ENCODE measurements at regions of chr6 and their contacts with region 1.

Region 1: DNA sequence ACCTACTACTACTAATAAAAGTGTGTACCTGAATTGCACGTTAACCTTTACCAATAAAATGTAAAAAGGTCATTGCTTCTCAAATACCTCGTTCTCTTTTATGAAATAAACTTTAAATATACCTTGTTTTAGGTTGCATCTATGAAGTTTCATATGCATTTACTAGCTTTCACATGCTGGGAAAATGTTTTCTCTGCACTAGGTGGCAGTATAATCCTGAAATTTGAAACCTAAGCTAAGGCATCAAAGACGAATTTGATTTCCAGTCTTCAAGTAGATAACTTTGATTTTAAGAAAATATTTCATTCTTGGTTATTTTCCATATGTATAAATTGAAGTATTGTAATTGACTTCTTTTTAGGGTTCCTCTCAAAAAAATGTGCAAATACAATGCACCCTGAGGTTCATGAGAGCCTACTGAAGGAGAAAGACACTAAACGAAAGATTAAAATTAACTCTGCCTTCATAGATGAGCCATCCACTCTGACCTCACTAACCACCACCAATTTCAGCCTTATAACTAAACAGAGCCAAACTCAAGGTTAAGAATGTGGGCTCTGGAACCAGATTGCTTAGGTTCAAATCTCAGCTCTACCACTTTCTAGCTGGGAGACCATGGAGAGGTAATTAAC is 7.3 kb upstream of the COL9A1 start:
- DNase-seq: no peak
- ATAC-seq: peak; percentile 56; the same call in 2 of the 3 replicates
- H3K4me3 ChIP-seq: no peak overlapping the region
- H3K27ac ChIP-seq: no peak overlapping the region
- H3K4me1 ChIP-seq: 0 out of 2 replicates have a peak, but pooled peaks cover 3% of the 10 kb centered on the region
- H3K27me3 ChIP-seq: no peaks in the 10 kb centered on the region
- CTCF ChIP-seq: peak; percentile 39 to 69 (median 48); a peak in 5 of 6 replicates
- EP300 ChIP-seq: no peak
- POLR2A ChIP-seq: no peak
- RAD21 ChIP-seq: peak; percentile 76

Region 2: DNA sequence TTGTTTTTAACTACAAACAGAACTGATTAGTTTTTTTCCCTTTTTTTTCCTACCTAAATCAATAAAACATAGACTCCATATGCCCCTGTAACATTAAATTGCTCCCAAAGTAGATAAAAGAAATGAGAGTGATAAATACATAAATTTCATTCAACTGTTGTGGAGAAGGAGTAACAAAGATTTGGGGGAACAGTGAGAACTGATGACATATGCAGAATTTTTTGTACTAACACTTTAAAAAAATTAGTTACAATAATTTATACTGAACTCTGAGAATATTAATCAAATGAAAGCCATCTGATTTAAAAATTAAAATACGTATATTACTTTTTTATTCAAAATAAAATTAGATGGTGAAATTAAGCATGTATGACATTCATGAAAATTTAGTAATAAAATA is 248.2 kb before region 1 on chr6:
- CTCF ChIA-PET with region 1: no interaction called
- POLR2A ChIA-PET with region 1: no interaction called
- RAD21 ChIA-PET with region 1: no interaction called
- SMC1A ChIA-PET with region 1: no interaction called
- in situ Hi-C with region 1: no loop called
- intact Hi-C with region 1: no loop called
- DNase-seq: no peak
- ATAC-seq: no peak
- H3K4me3 ChIP-seq: no peak overlapping the region
- H3K27ac ChIP-seq: no peak overlapping the region
- H3K4me1 ChIP-seq: no peaks in the 10 kb centered on the region
- H3K27me3 ChIP-seq: no peaks in the 10 kb centered on the region
- CTCF ChIP-seq: no peak
- EP300 ChIP-seq: no peak
- POLR2A ChIP-seq: no peak
- RAD21 ChIP-seq: no peak

Region 3: DNA sequence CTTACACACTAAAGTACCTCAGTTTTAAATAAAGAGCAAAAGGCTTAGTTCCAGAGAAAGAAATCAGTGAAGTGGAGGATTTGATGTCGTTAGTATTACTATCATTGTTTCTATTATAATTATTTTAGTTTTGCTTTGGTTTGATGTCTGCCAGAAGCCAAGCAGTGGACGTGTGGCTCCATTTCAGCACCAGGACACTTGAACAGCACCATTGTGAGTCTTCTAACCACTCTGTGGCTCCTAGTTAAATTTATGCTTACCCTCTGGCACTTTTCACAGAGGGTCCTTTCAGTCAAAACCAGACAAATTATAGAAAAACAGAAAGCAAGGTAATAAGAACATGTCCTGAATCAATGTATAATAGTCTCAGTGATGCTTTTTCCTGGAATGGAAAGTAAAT is 10.7 kb before region 1 on chr6:
- CTCF ChIA-PET with region 1: interaction called, 46 read pairs
- POLR2A ChIA-PET with region 1: interaction called, 3 read pairs
- RAD21 ChIA-PET with region 1: interaction called, 5 read pairs
- SMC1A ChIA-PET with region 1: interaction called, 3 read pairs
- in situ Hi-C with region 1: no loop called
- intact Hi-C with region 1: no loop called
- DNase-seq: no peak
- ATAC-seq: no peak
- H3K4me3 ChIP-seq: no peak overlapping the region
- H3K27ac ChIP-seq: no peak overlapping the region
- H3K4me1 ChIP-seq: no peaks in the 10 kb centered on the region
- H3K27me3 ChIP-seq: no peaks in the 10 kb centered on the region
- CTCF ChIP-seq: no peak
- EP300 ChIP-seq: no peak
- POLR2A ChIP-seq: no peak
- RAD21 ChIP-seq: no peak

Region 4: DNA sequence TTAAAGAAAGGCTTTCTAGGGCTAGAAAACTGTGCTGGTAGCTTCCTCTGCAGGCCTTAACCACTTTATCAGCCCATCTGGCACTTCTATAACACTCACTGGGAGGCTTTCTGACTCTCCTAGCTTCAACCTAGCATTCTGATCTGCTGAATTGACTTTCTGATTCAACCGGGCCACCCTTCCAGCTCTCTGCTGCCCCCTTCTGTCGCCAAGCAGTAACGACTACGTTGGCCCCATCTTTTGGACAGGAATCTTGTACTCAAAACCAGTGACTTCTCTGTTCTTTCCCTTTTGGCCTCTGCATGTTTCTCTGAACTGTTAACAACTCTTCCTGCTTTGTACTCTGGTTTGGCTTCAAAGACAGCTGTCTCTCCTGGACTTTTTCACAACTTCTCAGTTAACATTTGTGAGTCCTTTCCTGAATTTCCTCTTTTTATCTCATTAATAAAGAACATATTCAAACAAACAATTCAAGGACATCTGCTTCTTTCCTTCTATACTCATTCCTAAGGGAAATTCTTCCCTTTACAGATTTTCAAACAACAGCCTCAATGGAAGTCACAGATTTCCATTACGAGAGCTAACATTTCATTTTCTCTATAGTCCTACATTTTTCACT is 59.3 kb after region 1 on chr6:
- CTCF ChIA-PET with region 1: interaction called, 257 read pairs
- POLR2A ChIA-PET with region 1: no interaction called
- RAD21 ChIA-PET with region 1: interaction called, 84 read pairs
- SMC1A ChIA-PET with region 1: interaction called, 103 read pairs
- in situ Hi-C with region 1: no loop called
- intact Hi-C with region 1: loop called (anchors 1 kb)
- DNase-seq: peak; percentile 21
- ATAC-seq: peak; percentile 96
- H3K4me3 ChIP-seq: no peak overlapping the region
- H3K27ac ChIP-seq: no peak overlapping the region
- H3K4me1 ChIP-seq: no peaks in the 10 kb centered on the region
- H3K27me3 ChIP-seq: no peaks in the 10 kb centered on the region; a peak in 3 of 4 replicates
- CTCF ChIP-seq: peak; percentile 90 to 93 (median 90)
- EP300 ChIP-seq: no peak
- POLR2A ChIP-seq: no peak
- RAD21 ChIP-seq: peak; percentile 86

Region 5: DNA sequence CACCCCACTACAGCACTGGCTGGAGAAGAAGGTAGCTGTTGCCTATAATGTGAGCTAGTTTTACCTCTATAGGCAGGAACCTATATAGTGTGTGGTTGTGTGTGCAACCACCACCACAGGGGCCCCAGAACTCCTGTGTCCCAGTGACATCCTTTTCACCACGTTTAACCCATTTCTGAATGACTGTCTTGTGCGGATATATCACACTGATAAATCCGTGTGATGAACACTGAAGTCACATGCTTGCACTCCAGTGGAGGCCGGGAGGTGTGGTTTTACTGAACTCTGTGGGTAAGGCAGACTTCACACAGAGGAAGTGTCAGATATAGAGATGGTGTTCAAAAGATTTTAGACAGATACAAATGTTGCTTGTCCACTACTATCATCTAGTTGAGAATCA is 289.0 kb after region 1 on chr6:
- CTCF ChIA-PET with region 1: no interaction called
- POLR2A ChIA-PET with region 1: no interaction called
- RAD21 ChIA-PET with region 1: no interaction called
- SMC1A ChIA-PET with region 1: no interaction called
- in situ Hi-C with region 1: no loop called
- intact Hi-C with region 1: no loop called
- DNase-seq: no peak
- ATAC-seq: no peak
- H3K4me3 ChIP-seq: no peak overlapping the region
- H3K27ac ChIP-seq: no peak overlapping the region
- H3K4me1 ChIP-seq: no peaks in the 10 kb centered on the region
- H3K27me3 ChIP-seq: no peaks in the 10 kb centered on the region
- CTCF ChIP-seq: no peak
- EP300 ChIP-seq: no peak
- POLR2A ChIP-seq: no peak
- RAD21 ChIP-seq: no peak

Region 6: DNA sequence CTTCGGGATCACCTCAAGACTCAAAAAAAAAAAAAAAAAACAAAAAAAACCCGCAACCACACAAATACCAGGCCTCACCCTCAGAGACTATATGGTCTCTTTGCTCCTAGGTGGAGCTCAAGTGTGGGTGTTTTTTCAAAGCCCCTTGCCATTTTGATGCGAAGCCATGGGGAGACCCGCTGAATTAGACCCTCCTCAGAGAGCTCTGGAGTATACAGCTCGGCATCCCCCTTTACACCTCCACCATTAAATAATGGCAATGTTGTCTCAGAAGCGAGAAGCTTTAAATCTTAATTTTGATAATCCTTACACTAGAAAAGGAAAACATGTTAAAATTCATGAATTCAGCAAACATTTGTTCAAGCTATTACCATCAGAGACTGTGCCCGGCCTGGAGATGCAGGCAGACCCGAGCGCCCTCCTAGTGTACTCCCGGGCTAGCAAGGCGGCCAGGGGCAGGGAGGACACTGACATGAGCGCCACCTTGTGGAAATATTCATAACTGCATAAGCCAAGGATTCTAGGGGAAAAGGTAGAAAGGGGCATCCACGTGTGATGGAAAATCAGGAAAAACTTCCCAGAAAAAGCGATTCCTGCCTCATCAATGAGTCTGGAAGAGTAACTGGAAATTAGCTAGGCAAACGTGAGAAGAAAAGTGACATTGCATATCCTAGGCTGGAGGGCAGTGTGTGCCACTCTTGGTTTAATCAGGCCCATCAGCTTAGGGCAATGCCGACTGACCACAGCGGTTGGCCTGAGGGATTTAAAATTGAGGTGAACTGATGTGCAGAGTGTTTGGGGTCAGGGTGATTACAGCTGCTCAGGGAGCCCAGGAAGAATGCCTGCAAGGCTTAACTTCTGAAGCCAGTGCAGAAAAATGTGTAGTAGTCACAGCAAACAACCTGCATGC is 574.1 kb after region 1 on chr6:
- CTCF ChIA-PET with region 1: interaction called, 12 read pairs
- POLR2A ChIA-PET with region 1: no interaction called
- RAD21 ChIA-PET with region 1: interaction called, 4 read pairs
- SMC1A ChIA-PET with region 1: interaction called, 10 read pairs
- in situ Hi-C with region 1: no loop called
- intact Hi-C with region 1: loop called (anchors 5 kb)
- DNase-seq: peak; percentile 19
- ATAC-seq: peak; percentile 94
- H3K4me3 ChIP-seq: no peak overlapping the region
- H3K27ac ChIP-seq: no peak overlapping the region
- H3K4me1 ChIP-seq: no peaks in the 10 kb centered on the region
- H3K27me3 ChIP-seq: no peaks in the 10 kb centered on the region
- CTCF ChIP-seq: peak; percentile 75 to 89 (median 87); a peak in 4 of 6 replicates
- EP300 ChIP-seq: no peak
- POLR2A ChIP-seq: no peak
- RAD21 ChIP-seq: peak; percentile 97

Region 7: GRCh38 chr6:71012866-71013469 is 702.8 kb after region 1 on chr6:
- CTCF ChIA-PET with region 1: interaction called, 50 read pairs
- POLR2A ChIA-PET with region 1: no interaction called
- RAD21 ChIA-PET with region 1: interaction called, 6 read pairs
- SMC1A ChIA-PET with region 1: interaction called, 12 read pairs
- in situ Hi-C with region 1: loop called (anchors 10 kb)
- intact Hi-C with region 1: loop called (anchors 1 kb)
- DNase-seq: peak; percentile 12
- ATAC-seq: peak; percentile 97
- H3K4me3 ChIP-seq: no peak overlapping the region
- H3K27ac ChIP-seq: no peak overlapping the region
- H3K4me1 ChIP-seq: no peaks in the 10 kb centered on the region
- H3K27me3 ChIP-seq: no peaks in the 10 kb centered on the region; a peak in 1 of 4 replicates
- CTCF ChIP-seq: peak; percentile 76 to 83 (median 80)
- EP300 ChIP-seq: no peak
- POLR2A ChIP-seq: no peak
- RAD21 ChIP-seq: peak; percentile 90